AG04449 (cell line): ENCODE measurements at regions of chrX and their contacts with region 1.

Region 1: GRCh38 chrX:13646154-13646549 is 6.8 kb upstream of the TCEANC start:
- DNase-seq: no peak
- H3K4me3 ChIP-seq: no peak overlapping the region
- CTCF ChIP-seq: peak; percentile 73

Region 2: GRCh38 chrX:13506574-13506973 is 139.6 kb before region 1 on chrX:
- CTCF ChIA-PET with region 1: interaction called, 64 read pairs
- POLR2A ChIA-PET with region 1: no interaction called
- DNase-seq: no peak
- H3K4me3 ChIP-seq: no peak overlapping the region
- CTCF ChIP-seq: peak; percentile 20

Region 3: GRCh38 chrX:13511944-13512330 is 134.2 kb before region 1 on chrX:
- CTCF ChIA-PET with region 1: interaction called, 64 read pairs
- POLR2A ChIA-PET with region 1: no interaction called
- DNase-seq: no peak
- H3K4me3 ChIP-seq: no peak overlapping the region
- CTCF ChIP-seq: no peak